Activated CD4-positive, alpha-beta T cell treated with anti-CD3 and anti-CD28 coated beads for 36 hours (primary cell): ENCODE measurements at regions of chr17 and their contacts with region 1.

Region 1: GRCh38 chr17:13017659-13018459 is at the start of gene ELAC2:
- DNase-seq: peak; percentile 98
- ATAC-seq: peak; percentile 96
- H3K4me3 Mint-ChIP-seq: peak within 1 kb of the TSS; percentile 95
- H3K27ac Mint-ChIP-seq: peak within 1 kb of the TSS; percentile 98
- H3K4me1 Mint-ChIP-seq: peaks cover 31% of the 10 kb centered on the region
- H3K27me3 Mint-ChIP-seq: no peaks in the 10 kb centered on the region
- total RNA-seq, gene ELAC2: 67.4 to 96.6 TPM

Region 2: GRCh38 chr17:11997147-11997846 is 1020.6 kb before region 1 on chr17 and contains the start of gene ZNF18:
- CTCF ChIA-PET with region 1: no interaction called
- POLR2A ChIA-PET with region 1: interaction called, 3 read pairs
- intact Hi-C with region 1: loop called (anchors 1 to 5 kb)
- DNase-seq: peak; percentile 98
- ATAC-seq: peak; percentile 99
- H3K4me3 Mint-ChIP-seq: peak within 1 kb of the TSS; percentile 78
- H3K27ac Mint-ChIP-seq: peak within 1 kb of the TSS; percentile 86
- H3K4me1 Mint-ChIP-seq: peaks cover 15% of the 10 kb centered on the region
- H3K27me3 Mint-ChIP-seq: no peaks in the 10 kb centered on the region
- total RNA-seq, gene ZNF18: 7.3 to 7.4 TPM

Region 3: DNA sequence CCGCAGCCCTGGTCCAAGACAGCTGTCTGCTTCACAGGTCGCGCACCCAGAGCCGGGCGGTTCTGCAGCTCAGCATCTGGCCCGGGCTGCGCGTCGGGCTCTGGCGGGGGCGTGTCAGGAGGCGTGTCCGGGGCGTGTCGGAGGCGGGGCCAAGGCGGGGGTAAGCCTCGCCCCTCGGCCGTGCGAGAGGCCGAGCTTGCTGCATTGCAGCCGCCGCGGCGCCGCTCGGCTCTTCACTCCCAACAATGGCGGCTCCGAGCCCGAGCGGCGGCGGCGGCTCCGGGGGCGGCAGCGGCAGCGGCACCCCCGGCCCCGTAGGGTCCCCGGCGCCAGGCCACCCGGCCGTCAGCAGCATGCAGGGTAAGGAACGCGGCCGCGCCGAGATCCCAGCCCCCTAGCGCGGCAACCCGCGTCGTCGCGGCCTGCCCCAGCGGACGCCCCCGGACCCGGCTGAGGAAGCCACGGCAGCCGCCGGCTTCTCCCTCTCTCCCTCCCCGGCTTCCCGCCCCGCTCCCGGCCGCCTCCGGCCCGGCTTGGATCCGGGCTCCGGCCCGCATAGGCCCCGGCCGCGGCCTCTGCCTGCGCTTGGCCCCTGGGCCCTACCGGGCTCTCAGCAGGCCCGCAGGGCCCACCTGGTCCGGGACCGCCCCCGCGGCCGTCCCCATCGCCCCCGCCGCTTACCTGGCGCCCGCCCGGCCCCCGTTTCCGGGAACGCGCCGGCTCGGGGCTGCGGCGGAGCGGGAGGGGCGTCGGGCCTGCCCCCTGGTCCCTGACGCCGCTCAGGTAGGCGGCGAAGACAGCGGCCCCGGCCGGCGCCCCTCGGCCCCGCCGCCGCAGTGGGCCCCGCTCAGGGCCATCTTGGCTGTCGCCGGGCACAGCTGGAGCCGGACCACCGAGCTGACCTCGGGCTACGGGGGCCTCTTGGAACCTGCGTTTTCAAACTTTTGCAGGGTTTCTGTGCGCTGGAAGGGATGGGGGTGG is 996.9 kb before region 1 on chr17 and contains the start of gene MAP2K4:
- CTCF ChIA-PET with region 1: no interaction called
- POLR2A ChIA-PET with region 1: interaction called, 3 read pairs
- intact Hi-C with region 1: loop called in 1 of 2 experiments (anchors 10 kb)
- DNase-seq: peak; percentile 96
- ATAC-seq: peak; percentile 94
- H3K4me3 Mint-ChIP-seq: peak within 1 kb of the TSS; percentile 73
- H3K27ac Mint-ChIP-seq: peak within 1 kb of the TSS; percentile 58
- H3K4me1 Mint-ChIP-seq: peaks cover 52% of the 10 kb centered on the region
- H3K27me3 Mint-ChIP-seq: peaks cover 2% of the 10 kb centered on the region
- total RNA-seq, gene MAP2K4: 30.1 to 36.2 TPM

Region 4: DNA sequence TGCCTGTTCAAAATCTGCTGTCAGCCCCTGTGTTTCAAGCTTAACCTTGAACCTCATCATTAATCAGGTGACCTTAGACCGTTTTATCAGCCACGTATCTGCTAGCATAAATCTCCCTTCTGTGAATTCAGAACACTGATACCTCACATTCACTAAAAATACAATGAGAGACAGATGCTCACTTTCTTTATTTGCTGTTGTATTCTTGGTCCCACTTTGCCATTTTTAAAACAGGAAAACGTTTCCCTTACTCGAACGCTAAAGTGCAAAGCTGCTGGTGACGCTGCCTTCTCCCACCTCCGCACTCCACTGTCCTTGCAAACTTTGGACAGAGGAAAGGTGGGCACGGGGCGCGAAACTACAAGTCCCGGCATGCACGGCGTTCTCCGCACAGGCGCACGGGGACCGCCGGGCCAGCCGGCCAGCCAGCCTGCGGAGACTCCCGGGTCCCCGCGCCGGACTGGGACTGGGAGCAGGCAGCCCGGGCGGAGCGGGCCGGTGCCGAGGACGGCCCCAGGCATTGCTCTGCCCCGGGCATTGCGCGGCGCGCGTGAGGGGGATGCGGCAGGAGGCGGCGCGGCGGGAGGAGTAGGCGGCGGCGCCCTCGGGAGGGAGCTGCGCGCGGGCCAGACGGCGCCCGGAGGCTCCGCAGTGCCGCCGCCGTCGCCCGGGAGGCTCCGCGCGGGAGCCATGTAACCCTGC is 228.6 kb before region 1 on chr17 and contains the start of gene ARHGAP44:
- CTCF ChIA-PET with region 1: no interaction called
- POLR2A ChIA-PET with region 1: no interaction called
- intact Hi-C with region 1: loop called in 1 of 2 experiments (anchors 1 kb)
- DNase-seq: peak; percentile 54
- ATAC-seq: peak; percentile 68
- H3K4me3 Mint-ChIP-seq: peak within 1 kb of the TSS; percentile 62
- H3K27ac Mint-ChIP-seq: no peak within 1 kb of the TSS
- H3K4me1 Mint-ChIP-seq: peaks cover 7% of the 10 kb centered on the region
- H3K27me3 Mint-ChIP-seq: peaks cover 32% of the 10 kb centered on the region
- total RNA-seq, gene ARHGAP44: 0.14 to 0.55 TPM

Region 5: DNA sequence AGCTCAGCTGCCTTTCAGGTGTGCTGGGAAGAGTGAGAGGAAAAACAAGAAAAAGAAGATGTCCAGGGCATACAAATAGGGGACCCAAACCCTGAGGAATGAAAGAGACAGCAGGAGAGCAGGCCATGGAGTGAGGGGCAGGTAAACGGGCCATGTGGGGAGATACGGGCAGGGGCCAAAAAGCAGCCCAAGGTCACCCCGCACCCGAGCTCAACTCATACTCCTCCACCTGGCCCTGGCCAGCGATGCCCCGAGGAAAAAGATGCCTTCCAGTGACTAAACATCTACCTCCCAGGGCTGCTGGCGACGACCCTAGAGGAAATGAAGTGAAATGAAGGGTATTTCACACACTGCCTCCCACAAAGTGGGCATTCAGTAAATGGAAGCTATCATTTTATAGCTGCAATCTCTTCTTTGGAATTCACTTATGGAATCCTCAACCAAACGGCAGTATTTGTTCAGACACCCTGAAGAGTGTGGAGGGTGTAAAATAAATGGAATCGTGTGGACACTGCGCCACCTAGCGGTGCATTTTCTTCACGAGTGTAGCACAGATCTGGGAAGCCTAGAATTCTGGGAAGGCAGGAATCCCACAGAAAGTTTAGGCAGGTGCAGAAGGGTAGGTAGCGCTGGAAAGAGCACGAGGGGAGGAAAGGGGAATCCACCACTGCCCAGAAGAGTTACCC is 14.9 kb before region 1 on chr17:
- CTCF ChIA-PET with region 1: interaction called, 29 read pairs
- POLR2A ChIA-PET with region 1: interaction called, 3 read pairs
- intact Hi-C with region 1: no loop called
- DNase-seq: peak; percentile 71
- ATAC-seq: no peak
- H3K4me3 Mint-ChIP-seq: no peak overlapping the region
- H3K27ac Mint-ChIP-seq: no peak overlapping the region
- H3K4me1 Mint-ChIP-seq: no peaks in the 10 kb centered on the region
- H3K27me3 Mint-ChIP-seq: no peaks in the 10 kb centered on the region

Region 6: DNA sequence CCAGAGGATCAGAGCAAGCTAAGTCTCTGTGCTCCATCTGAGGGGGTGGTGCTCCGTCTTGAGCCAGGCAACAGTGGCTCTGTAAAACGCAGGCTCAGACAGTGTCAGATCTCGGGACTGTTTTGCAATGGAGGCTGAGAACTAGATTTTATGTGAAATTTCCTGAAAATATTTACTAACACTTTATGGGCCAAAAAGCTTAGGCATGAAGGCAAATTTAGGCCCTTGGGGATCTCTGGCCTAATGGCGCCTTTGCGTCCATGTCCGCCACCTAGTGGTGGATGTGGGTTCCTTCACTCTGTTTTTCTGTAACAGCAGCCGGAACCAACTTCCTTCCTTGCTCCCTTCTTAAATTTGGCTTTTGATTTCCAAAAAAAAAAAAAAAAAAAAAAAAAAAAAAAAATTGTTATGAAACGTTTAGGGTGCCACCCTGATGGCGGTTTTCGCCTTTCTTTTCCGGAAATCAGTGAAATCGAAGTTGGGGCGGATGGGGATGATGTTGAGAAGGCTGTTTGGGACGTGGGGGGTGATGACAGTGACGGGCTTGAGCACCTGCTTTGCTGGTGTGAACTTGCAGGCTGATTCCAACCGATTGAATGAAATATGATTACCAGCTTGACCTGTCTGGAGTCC is 14.0 kb after region 1 on chr17:
- CTCF ChIA-PET with region 1: interaction called, 87 read pairs
- POLR2A ChIA-PET with region 1: no interaction called
- intact Hi-C with region 1: no loop called
- DNase-seq: peak; percentile 66
- ATAC-seq: peak; percentile 80
- H3K4me3 Mint-ChIP-seq: no peak overlapping the region
- H3K27ac Mint-ChIP-seq: no peak overlapping the region
- H3K4me1 Mint-ChIP-seq: peaks cover 7% of the 10 kb centered on the region
- H3K27me3 Mint-ChIP-seq: peaks cover 5% of the 10 kb centered on the region

Region 7: GRCh38 chr17:13067629-13068303 is 49.9 kb after region 1 on chr17:
- CTCF ChIA-PET with region 1: no interaction called
- POLR2A ChIA-PET with region 1: no interaction called
- intact Hi-C with region 1: no loop called
- DNase-seq: no peak
- ATAC-seq: no peak
- H3K4me3 Mint-ChIP-seq: no peak overlapping the region
- H3K27ac Mint-ChIP-seq: no peak overlapping the region
- H3K4me1 Mint-ChIP-seq: no peaks in the 10 kb centered on the region
- H3K27me3 Mint-ChIP-seq: peaks cover 5% of the 10 kb centered on the region

Region 8: DNA sequence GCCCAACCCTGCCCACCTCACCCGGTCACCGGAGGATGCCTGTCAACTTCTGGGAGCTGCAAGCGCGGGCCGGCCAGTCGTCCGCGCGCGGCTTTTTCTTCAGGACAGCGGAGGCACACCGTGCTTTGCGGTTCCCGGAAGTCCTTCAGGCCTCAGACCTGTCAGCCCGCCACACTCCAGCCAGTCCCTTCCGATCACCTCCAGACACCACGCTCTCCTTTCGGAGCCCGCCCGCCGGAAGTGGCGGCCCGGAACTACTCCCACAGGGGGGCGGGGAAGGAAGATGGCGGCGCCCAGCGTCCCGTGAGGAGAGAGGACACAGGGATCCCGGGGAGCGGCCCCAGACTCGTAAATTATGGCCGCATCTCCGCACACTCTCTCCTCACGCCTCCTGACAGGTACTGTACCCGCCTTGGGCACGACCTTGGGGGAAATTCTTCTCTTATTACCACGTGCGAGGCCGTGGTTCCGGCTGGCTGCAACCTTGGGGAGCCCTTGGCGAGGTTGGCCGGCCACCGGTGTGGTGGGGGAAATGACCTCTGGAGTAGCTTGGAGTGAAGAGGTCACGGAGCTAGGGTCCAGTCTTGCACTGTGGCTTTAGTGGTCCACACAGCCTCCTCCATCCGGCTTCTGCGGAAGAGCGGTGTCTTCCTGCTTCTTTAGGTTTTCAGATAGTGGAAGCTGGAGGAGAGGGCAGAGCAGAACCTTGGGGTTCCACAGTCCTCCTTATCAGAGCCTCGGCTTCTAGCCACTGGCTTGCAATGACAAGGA is 1051.6 kb after region 1 on chr17 and contains the start of gene COX10:
- CTCF ChIA-PET with region 1: no interaction called
- POLR2A ChIA-PET with region 1: no interaction called
- intact Hi-C with region 1: loop called in 1 of 2 experiments (anchors 5 kb)
- DNase-seq: peak; percentile 91
- ATAC-seq: peak; percentile 93
- H3K4me3 Mint-ChIP-seq: peak within 1 kb of the TSS; percentile 94
- H3K27ac Mint-ChIP-seq: peak within 1 kb of the TSS; percentile 94
- H3K4me1 Mint-ChIP-seq: peaks cover 54% of the 10 kb centered on the region
- H3K27me3 Mint-ChIP-seq: no peaks in the 10 kb centered on the region
- total RNA-seq, gene COX10: 22.0 to 32.5 TPM